ENCODE measurements at regions of chr11 and their contacts with region 1.

Region 1: GRCh38 chr11:109864151-109864661 is 229.0 kb upstream of the ZC3H12C start:
- DNase-seq: peak; percentile 85
- H3K4me3 ChIP-seq: no peak overlapping the region
- H3K27ac ChIP-seq: no peak overlapping the region
- H3K4me1 ChIP-seq: peaks cover 23% of the 10 kb centered on the region
- H3K27me3 ChIP-seq: no peaks in the 10 kb centered on the region
- CTCF ChIP-seq: no peak

Region 2: GRCh38 chr11:108237058-108237481 is 1627.1 kb before region 1 on chr11:
- CTCF ChIA-PET with region 1: interaction called, 10 read pairs
- POLR2A ChIA-PET with region 1: no interaction called
- intact Hi-C with region 1: no loop called
- DNase-seq: no peak
- H3K4me3 ChIP-seq: no peak overlapping the region
- H3K27ac ChIP-seq: no peak overlapping the region
- H3K4me1 ChIP-seq: no peaks in the 10 kb centered on the region
- H3K27me3 ChIP-seq: no peaks in the 10 kb centered on the region
- CTCF ChIP-seq: no peak

Region 3: DNA sequence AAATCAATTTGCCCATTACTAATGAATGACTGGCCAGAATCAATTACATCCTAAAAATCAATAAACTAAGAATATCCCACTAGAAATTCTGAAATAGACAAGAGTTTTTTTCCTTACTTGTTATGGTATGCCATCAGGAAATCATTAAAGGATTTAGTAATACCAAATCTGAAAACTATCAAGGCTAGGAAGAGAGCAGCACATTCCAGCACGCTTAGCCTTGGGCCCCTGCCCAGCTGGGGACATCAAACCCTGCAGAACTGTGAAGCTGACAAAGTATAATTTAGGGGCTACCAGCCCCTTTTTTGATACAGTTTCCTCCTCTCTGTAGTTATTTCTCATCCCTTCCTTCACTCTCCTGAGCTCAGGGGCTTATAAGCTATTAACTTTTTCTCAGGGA is 18.8 kb before region 1 on chr11:
- CTCF ChIA-PET with region 1: no interaction called
- POLR2A ChIA-PET with region 1: no interaction called
- intact Hi-C with region 1: no loop called
- DNase-seq: peak; percentile 95
- H3K4me3 ChIP-seq: no peak overlapping the region
- H3K27ac ChIP-seq: peak overlapping the region; percentile 66
- H3K4me1 ChIP-seq: peaks cover 54% of the 10 kb centered on the region
- H3K27me3 ChIP-seq: no peaks in the 10 kb centered on the region
- CTCF ChIP-seq: no peak

Measured in A673 (cell line).